Transverse colon (tissue), 4 donors: ENCODE measurements at regions of chr4 and their contacts with region 1.

Region 1: DNA sequence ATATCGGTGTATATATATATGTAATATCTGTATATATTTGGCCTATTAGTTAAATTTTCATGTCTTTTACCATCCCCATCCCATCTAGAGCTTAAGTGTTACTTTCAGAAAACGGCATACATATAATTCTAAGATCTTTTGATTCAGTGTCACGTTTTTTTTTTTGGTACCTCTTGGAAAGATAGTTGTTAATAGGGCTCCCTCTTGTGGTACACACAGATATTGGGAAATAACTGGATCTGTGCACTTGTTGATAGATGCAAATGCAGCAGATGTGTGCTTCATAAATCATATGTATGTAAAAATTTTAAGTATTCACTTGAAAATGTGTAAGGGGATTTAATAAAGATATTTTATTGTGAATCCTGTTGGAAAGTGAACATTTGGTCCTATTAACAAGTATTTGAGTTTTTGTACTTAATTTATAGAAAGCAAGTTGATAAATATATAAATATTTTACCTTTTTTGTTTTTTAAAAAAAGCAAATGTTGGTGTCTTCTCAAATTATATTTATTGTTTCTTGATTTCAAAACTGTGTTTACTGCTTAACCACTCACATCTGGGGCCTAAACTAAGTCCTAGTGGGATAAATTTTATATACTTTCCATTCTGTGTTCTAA is 74.7 kb downstream of the PAQR3 start:
- DNase-seq: no peak
- H3K4me3 ChIP-seq: no peak overlapping the region
- H3K27ac ChIP-seq: peak overlapping the region in 1 of 4 donors; percentile 33
- H3K4me1 ChIP-seq: peaks cover 0 to 34% (median 8%) of the 10 kb centered on the region in 4 donors
- H3K27me3 ChIP-seq: no peaks in the 10 kb centered on the region
- CTCF ChIP-seq: peak; percentile 74 to 81 (median 80)
- EP300 ChIP-seq: no peak
- POLR2A ChIP-seq: no peak

Region 2: GRCh38 chr4:77959566-77960338 is 904.8 kb before region 1 on chr4:
- in situ Hi-C with region 1: loop called in 3 of 4 experiments (anchors 25 kb)
- intact Hi-C with region 1: no loop called
- DNase-seq: no peak
- H3K4me3 ChIP-seq: no peak overlapping the region
- H3K27ac ChIP-seq: no peak overlapping the region
- H3K4me1 ChIP-seq: peaks cover 0 to 4% (median 0%) of the 10 kb centered on the region in 4 donors
- H3K27me3 ChIP-seq: no peaks in the 10 kb centered on the region
- CTCF ChIP-seq: peak; percentile 50 to 65 (median 61)
- EP300 ChIP-seq: no peak
- POLR2A ChIP-seq: no peak

Region 3: DNA sequence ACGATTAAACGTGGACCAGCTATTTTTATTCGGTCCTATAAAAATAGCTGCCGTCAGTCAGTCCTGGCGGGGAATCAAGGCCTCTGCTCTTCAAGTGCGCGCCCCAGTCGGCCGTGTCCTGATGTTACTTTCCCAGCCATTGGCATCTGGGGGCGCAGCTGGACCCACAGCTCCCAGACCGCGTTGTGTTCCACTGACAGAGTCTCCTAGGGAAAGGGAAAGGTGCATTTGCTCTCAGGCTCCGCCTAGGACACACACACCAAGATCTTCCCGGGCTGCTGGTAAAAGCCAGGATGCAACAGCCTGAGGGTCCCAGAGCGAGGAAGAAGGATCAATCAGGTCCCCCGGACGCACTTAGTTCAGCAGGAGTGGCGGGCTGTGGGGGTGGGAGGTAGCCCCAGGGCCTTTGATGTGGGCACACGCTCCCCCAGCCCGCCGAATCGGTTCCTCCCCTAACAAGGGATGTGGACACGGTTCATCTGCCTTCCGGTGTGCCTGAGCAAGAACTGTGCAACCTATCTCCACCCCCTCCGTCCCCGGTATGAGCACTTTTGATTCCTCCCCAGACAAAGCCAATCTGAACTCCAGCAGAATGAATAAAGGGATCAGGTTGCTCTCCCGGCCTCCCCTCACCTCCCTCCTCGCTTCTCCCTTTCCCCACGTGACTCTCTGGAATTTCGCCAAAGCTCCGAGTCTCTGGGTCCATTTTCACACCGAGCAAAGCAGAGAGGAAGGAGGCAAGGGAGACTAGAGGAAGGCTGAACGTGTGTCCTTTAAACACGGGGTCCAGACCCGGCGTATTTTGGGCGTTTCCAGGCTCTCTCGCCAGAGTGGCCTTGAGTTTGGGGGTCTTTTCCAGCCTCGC is 808.0 kb before region 1 on chr4:
- in situ Hi-C with region 1: loop called in 1 of 4 experiments (anchors 25 kb)
- intact Hi-C with region 1: no loop called
- DNase-seq: peak; percentile 73
- H3K4me3 ChIP-seq: peak overlapping the region; percentile 44 to 63 (median 54)
- H3K27ac ChIP-seq: peak overlapping the region; percentile 63 to 81 (median 70)
- H3K4me1 ChIP-seq: peaks cover 0 to 33% (median 25%) of the 10 kb centered on the region in 4 donors
- H3K27me3 ChIP-seq: peaks cover 33% of the 10 kb centered on the region
- CTCF ChIP-seq: no peak
- EP300 ChIP-seq: no peak
- POLR2A ChIP-seq: no peak

Region 4: GRCh38 chr4:78601013-78601412 is 263.5 kb before region 1 on chr4:
- in situ Hi-C with region 1: loop called in 2 of 4 experiments (anchors 10 to 25 kb)
- intact Hi-C with region 1: no loop called
- DNase-seq: no peak
- H3K4me3 ChIP-seq: no peak overlapping the region
- H3K27ac ChIP-seq: no peak overlapping the region
- H3K4me1 ChIP-seq: peaks cover 0 to 5% (median 0%) of the 10 kb centered on the region in 4 donors
- H3K27me3 ChIP-seq: no peaks in the 10 kb centered on the region
- CTCF ChIP-seq: no peak
- EP300 ChIP-seq: no peak
- POLR2A ChIP-seq: no peak

Region 5: GRCh38 chr4:78612398-78613178 is 251.9 kb before region 1 on chr4:
- in situ Hi-C with region 1: loop called (anchors 5 to 25 kb)
- intact Hi-C with region 1: loop called (anchors 10 kb)
- DNase-seq: peak; percentile 26
- H3K4me3 ChIP-seq: no peak overlapping the region
- H3K27ac ChIP-seq: no peak overlapping the region
- H3K4me1 ChIP-seq: peaks cover 0 to 19% (median 1%) of the 10 kb centered on the region in 4 donors
- H3K27me3 ChIP-seq: no peaks in the 10 kb centered on the region
- CTCF ChIP-seq: peak; percentile 56 to 77 (median 60)
- EP300 ChIP-seq: no peak
- POLR2A ChIP-seq: no peak

Region 6: GRCh38 chr4:78634011-78634664 is 230.4 kb before region 1 on chr4:
- in situ Hi-C with region 1: no loop called
- intact Hi-C with region 1: no loop called
- DNase-seq: no peak
- H3K4me3 ChIP-seq: no peak overlapping the region
- H3K27ac ChIP-seq: peak overlapping the region in 2 of 4 donors; percentile 12 to 20
- H3K4me1 ChIP-seq: peaks cover 4 to 19% (median 11%) of the 10 kb centered on the region in 4 donors
- H3K27me3 ChIP-seq: no peaks in the 10 kb centered on the region
- CTCF ChIP-seq: no peak
- EP300 ChIP-seq: no peak
- POLR2A ChIP-seq: no peak